Heart left ventricle (tissue), 16 donors: ENCODE measurements at regions of chr5 and their contacts with region 1.

Region 1: GRCh38 chr5:178196986-178197385 is 7.3 kb upstream of the HNRNPAB start:
- DNase-seq: no peak
- ATAC-seq: peak in 3 of 4 donors; percentile 32 to 56 (median 41)
- H3K4me3 ChIP-seq: no peak overlapping the region
- H3K27ac ChIP-seq: no peak overlapping the region
- H3K4me1 ChIP-seq: peaks cover 0 to 13% (median 0%) of the 10 kb centered on the region in 12 donors
- H3K27me3 ChIP-seq: peaks cover 0 to 15% (median 0%) of the 10 kb centered on the region in 9 donors
- CTCF ChIP-seq: peak in 11 of 12 donors; percentile 13 to 44 (median 29)
- POLR2A ChIP-seq: no peak

Region 2: GRCh38 chr5:178153573-178154343 is 43.2 kb before region 1 on chr5 and contains the start of gene NHP2:
- intact Hi-C with region 1: loop called in 1 of 10 experiments (anchors 5 kb)
- DNase-seq: peak; percentile 98 to 99 (median 99)
- ATAC-seq: peak; percentile 99 to 100 (median 99)
- H3K4me3 ChIP-seq: peak within 1 kb of the TSS; percentile 57 to 97 (median 84)
- H3K27ac ChIP-seq: peak within 1 kb of the TSS in 11 of 12 donors; percentile 16 to 83 (median 68)
- H3K4me1 ChIP-seq: peaks cover 6 to 28% (median 17%) of the 10 kb centered on the region in 12 donors
- H3K27me3 ChIP-seq: no peaks in the 10 kb centered on the region
- CTCF ChIP-seq: no peak
- POLR2A ChIP-seq: peak in 1 of 2 donors; percentile 59
- total RNA-seq, gene NHP2: 60.9 to 196 (median 75.2) TPM